ENCODE measurements at regions of chr1 and their contacts with region 1.

Region 1: GRCh38 chr1:89206373-89206772 is 7.6 kb upstream of the GBP4 start:
- DNase-seq: no peak
- ATAC-seq: no peak
- H3K4me3 Mint-ChIP-seq: no peak overlapping the region
- H3K27ac Mint-ChIP-seq: no peak overlapping the region
- H3K4me1 Mint-ChIP-seq: peaks cover 25% of the 10 kb centered on the region
- H3K27me3 Mint-ChIP-seq: no peaks in the 10 kb centered on the region

Region 2: DNA sequence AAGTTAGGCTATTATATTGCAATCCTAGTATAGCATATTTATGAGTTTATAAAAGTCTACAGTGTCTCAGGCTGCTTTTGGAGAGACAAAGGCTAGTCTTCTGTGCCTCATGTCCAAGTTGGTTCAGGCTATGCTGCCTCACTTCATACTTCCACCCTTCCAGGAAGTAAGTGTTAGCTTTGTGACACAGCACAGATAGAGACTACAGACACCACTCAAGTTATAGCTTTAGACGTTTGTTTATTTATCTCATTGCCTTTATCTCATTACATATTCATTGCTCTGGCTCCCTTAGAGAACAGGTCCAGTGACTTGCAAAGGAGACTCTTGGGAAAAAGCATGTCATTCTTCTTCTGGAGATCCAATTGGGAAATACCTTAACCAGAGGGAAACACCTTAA is 15.0 kb after region 1 on chr1:
- CTCF ChIA-PET with region 1: interaction called, 3 read pairs
- POLR2A ChIA-PET with region 1: no interaction called
- intact Hi-C with region 1: loop called in 1 of 2 experiments (anchors 2 kb)
- DNase-seq: no peak
- ATAC-seq: no peak
- H3K4me3 Mint-ChIP-seq: no peak overlapping the region
- H3K27ac Mint-ChIP-seq: no peak overlapping the region
- H3K4me1 Mint-ChIP-seq: peaks cover 3% of the 10 kb centered on the region
- H3K27me3 Mint-ChIP-seq: no peaks in the 10 kb centered on the region

Region 3: GRCh38 chr1:89516055-89516454 is 309.7 kb after region 1 on chr1:
- CTCF ChIA-PET with region 1: no interaction called
- POLR2A ChIA-PET with region 1: no interaction called
- intact Hi-C with region 1: no loop called
- DNase-seq: no peak
- ATAC-seq: no peak
- H3K4me3 Mint-ChIP-seq: no peak overlapping the region
- H3K27ac Mint-ChIP-seq: no peak overlapping the region
- H3K4me1 Mint-ChIP-seq: peaks cover 27% of the 10 kb centered on the region
- H3K27me3 Mint-ChIP-seq: no peaks in the 10 kb centered on the region

Measured in activated CD4-positive, alpha-beta T cell treated with anti-CD3 and anti-CD28 coated beads for 36 hours (primary cell).